BJ (cell line): ENCODE measurements at regions of chr19 and their contacts with region 1.

Region 1: GRCh38 chr19:39846176-39846677 is at the start of gene FBL:
- DNase-seq: peak; percentile 35
- H3K4me3 ChIP-seq: peak within 1 kb of the TSS; percentile 67
- H3K27me3 ChIP-seq: no peaks in the 10 kb centered on the region
- CTCF ChIP-seq: no peak
- polyA plus RNA-seq, gene FBL: 228 and 372 TPM in 2 replicates

Region 2: GRCh38 chr19:39765091-39766076 is 80.8 kb before region 1 on chr19:
- CTCF ChIA-PET with region 1: interaction called, 13 read pairs
- POLR2A ChIA-PET with region 1: no interaction called
- DNase-seq: no peak
- H3K4me3 ChIP-seq: no peak overlapping the region
- H3K27me3 ChIP-seq: no peaks in the 10 kb centered on the region
- CTCF ChIP-seq: peak; percentile 87

Region 3: GRCh38 chr19:39792999-39793546 is 53.2 kb before region 1 on chr19:
- CTCF ChIA-PET with region 1: interaction called, 104 read pairs
- POLR2A ChIA-PET with region 1: no interaction called
- DNase-seq: peak; percentile 19
- H3K4me3 ChIP-seq: peak overlapping the region; percentile 58
- H3K27me3 ChIP-seq: no peaks in the 10 kb centered on the region; the same call in 1 of the 2 replicates
- CTCF ChIP-seq: peak; percentile 98

Region 4: GRCh38 chr19:39833464-39834286 is 12.6 kb before region 1 on chr19 and contains the start of gene DYRK1B:
- CTCF ChIA-PET with region 1: interaction called, 46 read pairs
- POLR2A ChIA-PET with region 1: interaction called, 11 read pairs
- DNase-seq: peak; percentile 76
- H3K4me3 ChIP-seq: peak within 1 kb of the TSS; percentile 90
- H3K27me3 ChIP-seq: no peaks in the 10 kb centered on the region
- CTCF ChIP-seq: no peak
- polyA plus RNA-seq, gene DYRK1B: 6.6 and 8.4 TPM in 2 replicates

Region 5: GRCh38 chr19:39970675-39971379 is 124.6 kb after region 1 on chr19 and contains the start of gene PSMC4:
- CTCF ChIA-PET with region 1: interaction called, 20 read pairs
- POLR2A ChIA-PET with region 1: interaction called, 4 read pairs
- DNase-seq: peak; percentile 96
- H3K4me3 ChIP-seq: peak within 1 kb of the TSS; percentile 93
- H3K27me3 ChIP-seq: no peaks in the 10 kb centered on the region
- CTCF ChIP-seq: peak; percentile 80
- polyA plus RNA-seq, gene PSMC4: 71.5 and 105 TPM in 2 replicates